Mammary epithelial cell (primary cell): ENCODE measurements at regions of chr10 and their contacts with region 1.

Region 1: DNA sequence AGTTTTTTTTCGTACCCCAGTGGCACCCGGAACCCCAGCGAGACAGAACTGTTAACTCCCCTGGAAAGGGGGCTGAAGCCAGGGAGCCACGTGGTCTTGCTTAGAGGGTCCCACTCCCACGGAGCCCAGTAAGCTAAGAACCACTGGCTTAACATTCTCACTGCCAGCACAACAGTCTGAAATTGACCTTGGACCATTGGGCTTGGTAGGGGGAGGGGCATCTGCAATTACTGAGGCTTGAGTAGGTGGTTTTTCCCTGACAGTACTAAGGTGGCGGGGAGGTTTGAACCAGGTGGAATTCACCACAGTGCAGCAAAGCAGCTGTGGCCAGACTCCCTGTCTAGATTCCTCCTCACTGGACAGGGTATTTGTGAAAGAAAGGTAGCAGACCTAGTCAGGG is 196.5 kb downstream of the ADK start:
- DNase-seq: no peak
- H3K4me3 ChIP-seq: no peak overlapping the region
- H3K27ac ChIP-seq: no peak overlapping the region
- H3K4me1 ChIP-seq: no peaks in the 10 kb centered on the region
- H3K27me3 ChIP-seq: no peaks in the 10 kb centered on the region
- CTCF ChIP-seq: no peak

Region 2: GRCh38 chr10:74384615-74385183 is 37.2 kb after region 1 on chr10:
- CTCF ChIA-PET with region 1: no interaction called
- dilution Hi-C with region 1: loop called (anchors 5 kb)
- in situ Hi-C with region 1: no loop called
- intact Hi-C with region 1: no loop called
- DNase-seq: no peak
- H3K4me3 ChIP-seq: no peak overlapping the region
- H3K27ac ChIP-seq: no peak overlapping the region
- H3K4me1 ChIP-seq: no peaks in the 10 kb centered on the region
- H3K27me3 ChIP-seq: no peaks in the 10 kb centered on the region
- CTCF ChIP-seq: no peak